Tibial artery (tissue), 4 donors: ENCODE measurements at regions of chr7 and their contacts with region 1.

Region 1: DNA sequence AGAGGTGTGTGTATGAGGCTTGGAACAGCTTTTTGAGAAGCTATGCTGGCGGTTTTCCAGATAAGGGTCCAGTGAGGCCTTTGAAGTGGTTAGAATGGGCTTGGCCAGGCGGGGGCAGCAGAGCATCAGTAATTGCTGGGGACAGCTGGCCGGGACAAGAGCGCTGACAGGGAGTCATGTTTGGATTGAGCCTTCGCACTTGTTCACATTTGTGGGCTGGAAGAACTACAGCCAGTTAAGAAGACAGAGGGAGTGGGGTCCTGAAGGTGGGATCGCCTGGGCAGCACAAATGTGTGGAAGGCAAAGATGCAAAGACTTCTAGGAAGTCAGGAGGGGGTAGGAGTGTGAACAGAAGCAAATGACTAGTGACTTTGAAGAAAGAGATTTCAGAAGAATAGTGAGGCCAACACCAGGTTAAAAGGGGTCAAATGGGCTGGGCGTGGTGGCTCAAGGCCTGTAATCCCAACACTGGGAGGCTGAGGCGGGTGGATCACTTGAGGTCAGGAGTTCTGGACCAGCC is 12.7 kb upstream of the SDHAF3 start:
- DNase-seq: peak; percentile 72 to 74
- H3K4me3 ChIP-seq: no peak overlapping the region
- H3K27ac ChIP-seq: no peak overlapping the region
- H3K4me1 ChIP-seq: no peaks in the 10 kb centered on the region
- H3K27me3 ChIP-seq: no peaks in the 10 kb centered on the region
- CTCF ChIP-seq: peak; percentile 67 to 76

Region 2: DNA sequence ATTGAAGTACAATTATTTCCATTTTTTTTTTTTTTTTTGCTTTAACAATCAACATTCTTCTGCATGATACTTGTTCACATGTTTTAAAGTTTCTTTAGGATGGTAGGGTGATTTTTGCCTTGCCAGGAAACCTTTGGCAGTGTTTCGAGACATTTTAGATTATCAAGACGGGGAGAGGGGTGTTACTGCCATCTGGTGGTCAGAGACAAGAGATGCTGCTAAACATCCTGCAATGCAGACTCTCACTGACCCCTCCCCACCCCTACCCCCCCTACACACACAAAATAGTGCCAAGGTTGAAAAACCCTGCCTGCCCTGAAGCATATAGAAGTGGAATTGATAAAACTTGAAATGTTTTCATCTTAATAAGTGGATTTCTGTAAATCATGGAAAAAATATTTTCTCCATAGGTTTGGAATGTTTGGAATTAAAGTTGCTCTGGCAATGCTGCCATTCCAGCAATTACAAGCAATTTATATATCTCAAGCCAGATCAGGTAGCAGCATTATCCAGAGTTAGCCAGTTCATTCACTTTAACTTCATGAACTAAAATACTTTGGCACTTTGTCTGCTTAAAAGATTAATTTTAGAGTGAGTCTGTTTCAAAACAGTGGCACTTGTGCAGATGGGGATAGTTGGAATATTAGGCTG is 74.8 kb after region 1 on chr7:
- intact Hi-C with region 1: loop called (anchors 5 kb)
- DNase-seq: no peak
- H3K4me3 ChIP-seq: no peak overlapping the region
- H3K27ac ChIP-seq: no peak overlapping the region
- H3K4me1 ChIP-seq: no peaks in the 10 kb centered on the region
- H3K27me3 ChIP-seq: no peaks in the 10 kb centered on the region
- CTCF ChIP-seq: peak; percentile 47 to 64

Region 3: GRCh38 chr7:97844032-97844431 is 739.3 kb after region 1 on chr7:
- intact Hi-C with region 1: loop called (anchors 5 kb)
- DNase-seq: no peak
- H3K4me3 ChIP-seq: no peak overlapping the region
- H3K27ac ChIP-seq: no peak overlapping the region
- H3K4me1 ChIP-seq: no peaks in the 10 kb centered on the region
- H3K27me3 ChIP-seq: peaks cover 0 to 9% of the 10 kb centered on the region in 2 donors
- CTCF ChIP-seq: no peak